ENCODE measurements at regions of chr14 and their contacts with region 1.

Region 1: GRCh38 chr14:69005432-69006147 is 26.5 kb upstream of the ACTN1 start:
- DNase-seq: peak in 3 of 6 donors; percentile 33 to 64 (median 41)
- ATAC-seq: peak; percentile 60 to 85 (median 71)
- H3K4me3 ChIP-seq: no peak overlapping the region
- H3K27ac ChIP-seq: no peak overlapping the region
- H3K4me1 ChIP-seq: no peaks in the 10 kb centered on the region
- H3K27me3 ChIP-seq: no peaks in the 10 kb centered on the region
- CTCF ChIP-seq: no peak

Region 2: GRCh38 chr14:68911594-68912227 is 93.9 kb before region 1 on chr14:
- intact Hi-C with region 1: loop called in 1 of 3 experiments (anchors 10 kb)
- DNase-seq: peak; percentile 61 to 88 (median 78)
- ATAC-seq: peak; percentile 89 to 96 (median 94)
- H3K4me3 ChIP-seq: no peak overlapping the region
- H3K27ac ChIP-seq: no peak overlapping the region
- H3K4me1 ChIP-seq: peaks cover 0 to 6% (median 0%) of the 10 kb centered on the region in 3 donors
- H3K27me3 ChIP-seq: no peaks in the 10 kb centered on the region
- CTCF ChIP-seq: peak; percentile 84 to 97 (median 93)